CD4-positive, alpha-beta memory T cell (primary cell): ENCODE measurements at regions of chrX and their contacts with region 1.

Region 1: DNA sequence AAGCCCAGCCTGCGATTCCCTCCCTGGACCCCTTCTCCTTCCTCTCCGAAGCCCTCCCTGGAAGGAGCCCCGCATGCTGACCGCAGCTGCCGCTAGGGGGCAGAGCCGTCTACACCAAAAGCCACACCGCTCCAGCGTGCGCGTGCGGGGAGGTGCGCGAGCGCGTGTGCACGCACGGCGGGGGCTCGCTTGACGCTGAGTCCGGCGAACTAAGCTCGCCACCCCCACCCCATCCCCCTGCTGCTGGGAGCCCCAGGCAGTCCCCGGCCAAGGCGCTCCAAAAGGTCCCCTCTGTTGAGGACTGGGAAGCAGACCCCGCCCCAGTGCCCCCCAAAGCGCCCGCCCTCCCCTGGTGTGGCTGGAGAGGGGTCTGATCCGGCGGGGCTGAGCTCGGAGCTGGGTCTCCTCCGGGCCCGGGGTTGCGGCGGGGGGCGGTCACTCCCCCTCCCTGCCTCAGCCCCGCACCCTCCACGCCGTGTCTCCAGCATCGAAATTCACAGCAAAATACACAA is 11.0 kb upstream of the CCNQ start:
- DNase-seq: peak; percentile 72 to 74 (median 73)
- H3K4me3 ChIP-seq: peak overlapping the region in 1 of 2 donors; percentile 38
- H3K4me3 Mint-ChIP-seq: peak overlapping the region; percentile 81 to 90 (median 83)
- H3K27ac ChIP-seq: no peak overlapping the region
- H3K27ac Mint-ChIP-seq: peak overlapping the region in 5 of 7 donors; percentile 46 to 91 (median 82)
- H3K4me1 ChIP-seq: peaks cover 15% of the 10 kb centered on the region
- H3K4me1 Mint-ChIP-seq: peaks cover 4 to 22% (median 11%) of the 10 kb centered on the region in 4 donors
- H3K27me3 ChIP-seq: no peaks in the 10 kb centered on the region
- H3K27me3 Mint-ChIP-seq: no peaks in the 10 kb centered on the region

Region 2: GRCh38 chrX:153554519-153555167 is 55.3 kb before region 1 on chrX:
- CTCF ChIA-PET with region 1: interaction called, 4 read pairs
- POLR2A ChIA-PET with region 1: interaction called, 3 read pairs
- intact Hi-C with region 1: loop called (anchors 2 kb)
- DNase-seq: peak; percentile 51 to 59 (median 53)
- H3K4me3 ChIP-seq: no peak overlapping the region
- H3K4me3 Mint-ChIP-seq: no peak overlapping the region
- H3K27ac ChIP-seq: no peak overlapping the region
- H3K27ac Mint-ChIP-seq: no peak overlapping the region
- H3K4me1 ChIP-seq: no peaks in the 10 kb centered on the region
- H3K4me1 Mint-ChIP-seq: no peaks in the 10 kb centered on the region
- H3K27me3 ChIP-seq: no peaks in the 10 kb centered on the region
- H3K27me3 Mint-ChIP-seq: no peaks in the 10 kb centered on the region

Region 3: GRCh38 chrX:153599192-153600031 is 10.6 kb before region 1 on chrX:
- CTCF ChIA-PET with region 1: interaction called, 42 read pairs
- POLR2A ChIA-PET with region 1: interaction called, 25 read pairs
- intact Hi-C with region 1: loop called (anchors 1 kb)
- DNase-seq: peak; percentile 82 to 87 (median 85)
- H3K4me3 ChIP-seq: peak overlapping the region; percentile 42 to 50
- H3K4me3 Mint-ChIP-seq: peak overlapping the region; percentile 88 to 94 (median 90)
- H3K27ac ChIP-seq: peak overlapping the region; percentile 65
- H3K27ac Mint-ChIP-seq: peak overlapping the region in 6 of 7 donors; percentile 29 to 88 (median 78)
- H3K4me1 ChIP-seq: peaks cover 53% of the 10 kb centered on the region
- H3K4me1 Mint-ChIP-seq: peaks cover 21 to 67% (median 41%) of the 10 kb centered on the region in 4 donors
- H3K27me3 ChIP-seq: no peaks in the 10 kb centered on the region
- H3K27me3 Mint-ChIP-seq: no peaks in the 10 kb centered on the region

Region 4: DNA sequence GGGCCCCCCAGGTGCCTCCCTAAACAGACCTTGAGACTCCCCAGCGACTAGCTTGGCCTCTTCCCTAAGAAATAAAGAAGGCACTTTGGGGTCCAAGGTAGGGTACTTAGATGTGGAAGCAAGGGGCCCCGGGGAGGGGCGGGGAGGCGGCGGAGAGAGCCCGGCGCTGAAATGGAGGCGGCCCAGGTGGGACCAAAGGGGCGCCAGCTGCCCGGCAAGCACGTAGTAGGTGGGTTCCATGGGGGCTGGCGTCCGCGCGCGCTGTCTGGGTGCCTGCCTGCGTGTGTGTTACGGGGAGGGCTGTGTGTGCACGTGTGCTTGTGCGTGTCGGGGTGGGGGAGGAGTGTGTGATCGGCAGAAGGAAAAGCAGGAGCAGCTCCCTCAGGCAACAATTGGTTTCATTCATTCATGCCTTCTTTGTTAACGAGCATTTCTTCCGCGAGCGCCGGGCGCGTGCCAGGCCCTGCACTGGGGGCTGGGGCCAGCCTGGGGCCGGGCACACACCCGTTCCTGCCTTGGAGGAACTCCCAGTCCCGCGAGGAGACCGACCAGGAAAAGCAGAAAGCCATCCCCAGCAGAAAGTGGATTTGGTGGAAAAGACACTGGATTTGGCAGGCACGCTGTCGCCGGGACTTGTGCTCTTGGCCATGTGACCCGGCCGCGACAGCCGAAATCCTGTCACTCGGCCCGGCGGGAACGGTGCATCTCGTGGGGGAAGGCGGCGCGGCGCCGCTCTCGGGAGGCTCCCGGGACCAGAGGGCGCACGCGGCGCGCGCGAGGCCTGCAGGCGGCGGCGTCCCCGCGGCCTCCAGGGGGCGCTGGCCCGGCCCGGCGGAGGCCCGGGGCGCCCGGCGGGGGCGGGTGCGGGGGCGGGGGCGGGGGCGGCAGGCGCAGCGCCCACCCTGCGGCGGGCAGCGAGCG is 33.7 kb after region 1 on chrX:
- CTCF ChIA-PET with region 1: interaction called, 33 read pairs
- POLR2A ChIA-PET with region 1: interaction called, 3 read pairs
- intact Hi-C with region 1: loop called (anchors 1 kb)
- DNase-seq: no peak
- H3K4me3 ChIP-seq: no peak overlapping the region
- H3K4me3 Mint-ChIP-seq: peak overlapping the region in 6 of 8 donors; percentile 47 to 74 (median 58)
- H3K27ac ChIP-seq: no peak overlapping the region
- H3K27ac Mint-ChIP-seq: no peak overlapping the region
- H3K4me1 ChIP-seq: peaks cover 10% of the 10 kb centered on the region
- H3K4me1 Mint-ChIP-seq: peaks cover 7 to 14% (median 11%) of the 10 kb centered on the region in 4 donors
- H3K27me3 ChIP-seq: peaks cover 10% of the 10 kb centered on the region
- H3K27me3 Mint-ChIP-seq: peaks cover 13% of the 10 kb centered on the region in 2 donors

Region 5: GRCh38 chrX:153649178-153649914 is 39.4 kb after region 1 on chrX:
- CTCF ChIA-PET with region 1: interaction called, 33 read pairs
- POLR2A ChIA-PET with region 1: interaction called, 5 read pairs
- intact Hi-C with region 1: no loop called
- DNase-seq: peak in 4 of 5 donors; percentile 28 to 43 (median 40)
- H3K4me3 ChIP-seq: no peak overlapping the region
- H3K4me3 Mint-ChIP-seq: no peak overlapping the region
- H3K27ac ChIP-seq: no peak overlapping the region
- H3K27ac Mint-ChIP-seq: no peak overlapping the region
- H3K4me1 ChIP-seq: no peaks in the 10 kb centered on the region
- H3K4me1 Mint-ChIP-seq: no peaks in the 10 kb centered on the region
- H3K27me3 ChIP-seq: peaks cover 3% of the 10 kb centered on the region
- H3K27me3 Mint-ChIP-seq: peaks cover 4 to 6% of the 10 kb centered on the region in 2 donors

Region 6: DNA sequence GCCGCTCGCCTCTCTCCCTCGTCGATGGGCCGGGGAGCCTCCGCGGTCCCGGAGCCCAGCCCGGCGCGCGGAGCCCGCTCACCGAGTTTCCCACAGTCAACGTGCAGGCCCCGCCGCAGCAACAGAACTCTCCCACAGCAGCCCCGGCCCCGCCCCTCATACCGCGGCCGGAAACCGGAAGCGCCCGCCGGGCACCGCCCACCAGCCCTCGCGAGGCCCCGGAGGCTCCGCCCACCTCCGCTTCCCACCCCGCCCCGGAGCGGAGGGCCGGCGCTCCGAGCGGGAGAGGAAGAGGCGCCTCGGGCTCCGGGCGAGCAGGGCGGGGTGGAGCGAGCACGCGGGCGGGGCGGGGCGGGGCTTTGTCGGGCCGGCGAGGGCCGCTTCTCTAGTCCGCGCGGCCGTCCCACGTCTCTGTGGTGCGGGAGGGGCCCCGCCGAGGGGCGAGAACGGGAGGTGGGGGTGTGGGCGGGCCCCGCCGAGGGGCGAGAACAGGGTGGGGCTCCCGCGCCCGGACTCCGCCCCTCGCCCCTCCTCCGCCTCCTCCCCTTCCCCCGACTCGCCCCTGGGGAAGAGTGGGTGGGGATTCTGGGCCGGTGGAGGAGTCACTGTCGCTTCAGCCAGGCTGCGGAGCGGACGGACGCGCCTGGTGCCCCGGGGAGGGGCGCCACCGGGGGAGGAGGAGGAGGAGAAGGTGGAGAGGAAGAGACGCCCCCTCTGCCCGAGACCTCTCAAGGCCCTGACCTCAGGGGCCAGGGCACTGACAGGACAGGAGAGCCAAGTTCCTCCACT is 114.5 kb after region 1 on chrX and contains the starts of genes ABCD1 and BCAP31:
- CTCF ChIA-PET with region 1: no interaction called
- POLR2A ChIA-PET with region 1: no interaction called
- intact Hi-C with region 1: loop called (anchors 10 kb)
- DNase-seq: peak; percentile 86 to 92 (median 91)
- H3K4me3 ChIP-seq: peak within 1 kb of the TSS; percentile 17 to 63
- H3K4me3 Mint-ChIP-seq: peak within 1 kb of the TSS; percentile 84 to 89 (median 87)
- H3K27ac ChIP-seq: peak within 1 kb of the TSS; percentile 71
- H3K27ac Mint-ChIP-seq: peak within 1 kb of the TSS; percentile 81 to 88 (median 85)
- H3K4me1 ChIP-seq: peaks cover 42% of the 10 kb centered on the region
- H3K4me1 Mint-ChIP-seq: peaks cover 12 to 38% (median 22%) of the 10 kb centered on the region in 4 donors
- H3K27me3 ChIP-seq: no peaks in the 10 kb centered on the region
- H3K27me3 Mint-ChIP-seq: no peaks in the 10 kb centered on the region
- total RNA-seq, gene ABCD1: 6.7 to 6.8 TPM
- total RNA-seq, gene BCAP31: 126 to 128 TPM